ENCODE measurements at regions of chr9 and their contacts with region 1.

Region 1: GRCh38 chr9:214648-215493 is at the start of gene DOCK8:
- DNase-seq: peak; percentile 73
- ATAC-seq: peak; percentile 89
- H3K4me3 Mint-ChIP-seq: peak within 1 kb of the TSS; percentile 76
- H3K27ac Mint-ChIP-seq: peak within 1 kb of the TSS; percentile 36
- H3K4me1 Mint-ChIP-seq: peaks cover 9% of the 10 kb centered on the region
- H3K27me3 Mint-ChIP-seq: peaks cover 15% of the 10 kb centered on the region
- CTCF ChIP-seq: no peak
- total RNA-seq, gene DOCK8: 163 to 166 TPM

Region 2: DNA sequence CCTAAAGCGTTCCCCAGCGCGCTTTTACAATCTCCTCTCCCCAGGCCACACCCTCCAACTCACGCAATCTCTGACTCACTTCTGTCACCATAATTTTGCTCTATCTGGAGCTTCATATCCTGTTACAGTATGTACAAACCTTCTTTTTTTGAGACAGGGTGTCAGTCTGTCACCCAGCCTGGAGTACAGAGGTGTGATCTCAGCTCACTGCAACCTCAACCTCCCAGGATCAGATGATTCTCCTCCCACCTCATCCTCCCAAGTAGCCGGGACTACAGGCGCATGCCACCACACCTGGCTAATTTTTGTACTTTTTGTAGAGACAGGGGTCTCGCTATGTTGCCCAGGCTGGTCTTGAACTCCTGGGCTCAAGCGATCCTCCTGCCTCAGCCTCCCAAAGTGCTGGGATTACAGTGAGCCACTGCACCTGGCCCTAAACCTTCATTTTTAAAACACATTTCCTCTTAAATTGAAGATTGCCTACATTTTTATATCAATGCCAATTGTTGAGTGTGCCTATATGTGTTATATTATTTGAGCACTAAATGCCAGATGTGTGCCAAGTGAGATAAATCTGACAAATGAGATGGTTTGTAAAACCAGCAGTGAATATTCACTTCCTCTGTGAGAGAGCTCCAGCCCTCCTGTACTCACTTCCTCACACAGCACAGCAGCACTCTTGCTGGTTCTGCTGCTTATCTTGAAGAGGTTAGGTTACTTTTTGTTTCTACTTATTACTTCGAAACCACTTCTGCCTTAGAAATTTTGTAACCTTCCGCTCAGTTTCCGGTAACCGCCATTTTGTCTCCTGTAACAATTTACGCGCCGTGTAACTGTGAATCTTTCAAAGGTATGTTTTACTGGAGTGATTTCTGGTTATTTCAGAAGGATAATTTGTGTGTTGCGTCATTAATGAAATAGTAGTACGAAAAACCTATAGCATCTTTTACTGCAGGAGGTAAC is 57.7 kb after region 1 on chr9:
- CTCF ChIA-PET with region 1: interaction called, 5 read pairs
- POLR2A ChIA-PET with region 1: interaction called, 3 read pairs
- intact Hi-C with region 1: loop called (anchors 5 kb)
- DNase-seq: peak; percentile 90
- ATAC-seq: peak; percentile 86
- H3K4me3 Mint-ChIP-seq: peak overlapping the region; percentile 95
- H3K27ac Mint-ChIP-seq: peak overlapping the region; percentile 99
- H3K4me1 Mint-ChIP-seq: peaks cover 39% of the 10 kb centered on the region
- H3K27me3 Mint-ChIP-seq: no peaks in the 10 kb centered on the region
- CTCF ChIP-seq: no peak

Region 3: GRCh38 chr9:336039-336438 is 121.2 kb after region 1 on chr9:
- CTCF ChIA-PET with region 1: no interaction called
- POLR2A ChIA-PET with region 1: no interaction called
- intact Hi-C with region 1: no loop called
- DNase-seq: no peak
- ATAC-seq: no peak
- H3K4me3 Mint-ChIP-seq: no peak overlapping the region
- H3K27ac Mint-ChIP-seq: peak overlapping the region; percentile 61
- H3K4me1 Mint-ChIP-seq: peaks cover 14% of the 10 kb centered on the region
- H3K27me3 Mint-ChIP-seq: no peaks in the 10 kb centered on the region
- CTCF ChIP-seq: no peak